ENCODE measurements at regions of chr12 and their contacts with region 1.

Region 1: GRCh38 chr12:56724972-56725722 is at the start of gene NACA:
- DNase-seq: peak; percentile 98 to 99
- H3K4me3 ChIP-seq: peak within 1 kb of the TSS; percentile 72 to 93 (median 85)
- H3K27ac ChIP-seq: peak within 1 kb of the TSS; percentile 86 to 96 (median 90)
- H3K4me1 ChIP-seq: peaks cover 42 to 55% (median 53%) of the 10 kb centered on the region in 4 donors
- H3K27me3 ChIP-seq: no peaks in the 10 kb centered on the region
- CTCF ChIP-seq: no peak
- EP300 ChIP-seq: no peak
- POLR2A ChIP-seq: peak in 2 of 4 donors; percentile 73 to 93
- total RNA-seq, gene NACA: 366 to 1,322 (median 558) TPM

Region 2: GRCh38 chr12:56645717-56646446 is 79.3 kb before region 1 on chr12 and contains the start of gene ATP5F1B:
- intact Hi-C with region 1: loop called (anchors 10 kb)
- DNase-seq: peak; percentile 98 to 100
- H3K4me3 ChIP-seq: peak within 1 kb of the TSS; percentile 84 to 98 (median 90)
- H3K27ac ChIP-seq: peak within 1 kb of the TSS; percentile 92 to 97 (median 95)
- H3K4me1 ChIP-seq: peaks cover 11 to 50% (median 42%) of the 10 kb centered on the region in 4 donors
- H3K27me3 ChIP-seq: no peaks in the 10 kb centered on the region
- CTCF ChIP-seq: no peak
- EP300 ChIP-seq: no peak
- POLR2A ChIP-seq: peak in 2 of 4 donors; percentile 93 to 97
- total RNA-seq, gene ATP5F1B: 183 to 604 (median 386) TPM

Measured in stomach (tissue), 19 donors.